ENCODE measurements at regions of chr2 and their contacts with region 1.

Region 1: GRCh38 chr2:230007931-230008707 is 60.6 kb downstream of the SLC16A14 start:
- DNase-seq: peak; percentile 46 to 81 (median 53)
- ATAC-seq: peak; percentile 53
- H3K4me3 ChIP-seq: no peak overlapping the region
- H3K27ac ChIP-seq: no peak overlapping the region
- H3K4me1 ChIP-seq: peaks cover 0 to 31% of the 10 kb centered on the region in 2 experiments; a peak in 3 of 5 replicates
- H3K27me3 ChIP-seq: no peaks in the 10 kb centered on the region
- CTCF ChIP-seq: peak; percentile 66 to 78 (median 69)
- EP300 ChIP-seq: no peak
- POLR2A ChIP-seq: no peak
- RAD21 ChIP-seq: peak; percentile 76 to 79

Region 2: DNA sequence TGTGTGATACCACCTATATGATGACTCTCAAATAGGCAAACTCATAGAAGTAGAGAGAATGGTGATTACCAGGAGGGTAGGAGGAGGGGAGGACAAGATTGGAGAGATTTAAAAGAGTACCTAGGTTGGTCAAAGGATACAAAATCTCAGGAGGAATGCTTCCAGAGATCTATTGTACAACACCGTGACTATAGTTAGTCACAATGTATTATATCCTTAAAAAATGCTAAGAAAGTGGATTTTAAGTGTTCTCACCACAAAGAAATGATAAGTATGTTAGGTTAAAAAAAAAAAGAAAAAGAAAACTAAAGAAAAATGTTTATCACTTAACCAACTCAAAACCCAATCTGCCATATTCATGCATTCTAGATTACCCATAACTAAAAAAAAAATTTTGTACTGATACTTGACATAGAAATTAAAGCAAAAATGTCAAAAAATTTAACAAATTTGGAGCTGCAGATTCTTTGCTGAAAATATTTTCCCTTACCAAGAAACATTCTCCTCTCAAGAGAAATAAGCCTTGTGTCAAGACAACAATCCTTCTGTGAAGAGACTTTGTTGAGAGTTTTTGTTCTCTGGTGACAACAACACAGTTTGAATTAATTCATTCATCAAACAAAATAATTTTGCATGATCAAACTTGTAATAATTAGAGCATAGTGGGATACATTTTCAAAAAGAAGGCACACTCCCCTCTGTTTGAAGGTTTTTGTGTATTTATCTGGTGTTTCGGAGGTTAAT is 506.9 kb before region 1 on chr2:
- CTCF ChIA-PET with region 1: no interaction called
- POLR2A ChIA-PET with region 1: no interaction called
- in situ Hi-C with region 1: no loop called
- intact Hi-C with region 1: no loop called
- DNase-seq: no peak
- ATAC-seq: no peak
- H3K4me3 ChIP-seq: no peak overlapping the region
- H3K27ac ChIP-seq: no peak overlapping the region
- H3K4me1 ChIP-seq: no peaks in the 10 kb centered on the region
- H3K27me3 ChIP-seq: no peaks in the 10 kb centered on the region
- CTCF ChIP-seq: no peak
- EP300 ChIP-seq: no peak
- POLR2A ChIP-seq: no peak
- RAD21 ChIP-seq: no peak

Region 3: DNA sequence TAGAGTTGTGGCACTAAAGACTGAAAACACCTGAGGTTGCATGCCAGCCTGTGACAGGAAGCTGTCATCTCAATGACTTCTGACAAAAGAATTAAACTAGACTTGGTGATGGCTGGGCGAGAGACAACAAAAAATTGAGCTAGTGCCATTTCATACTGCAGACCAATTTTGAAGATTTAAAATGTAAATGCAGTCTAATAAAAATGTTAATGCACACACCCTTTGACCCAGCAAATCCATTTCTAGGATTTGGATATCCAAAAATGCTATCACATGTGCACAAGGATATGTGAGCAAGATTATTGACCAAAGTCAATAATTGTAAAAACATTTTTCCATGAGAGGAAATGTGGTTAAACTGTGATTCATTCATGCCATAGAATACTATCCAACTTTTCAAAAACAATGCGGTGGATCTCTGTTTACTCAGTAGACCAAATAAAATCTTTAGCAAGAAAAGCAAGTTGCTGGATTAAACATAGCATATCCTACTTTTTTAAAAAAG is 80.2 kb before region 1 on chr2:
- CTCF ChIA-PET with region 1: no interaction called
- POLR2A ChIA-PET with region 1: no interaction called
- in situ Hi-C with region 1: no loop called
- intact Hi-C with region 1: no loop called
- DNase-seq: no peak
- ATAC-seq: no peak
- H3K4me3 ChIP-seq: no peak overlapping the region
- H3K27ac ChIP-seq: no peak overlapping the region
- H3K4me1 ChIP-seq: peaks cover 0 to 4% of the 10 kb centered on the region in 2 experiments; a peak in 2 of 5 replicates
- H3K27me3 ChIP-seq: no peaks in the 10 kb centered on the region
- CTCF ChIP-seq: no peak
- EP300 ChIP-seq: no peak
- POLR2A ChIP-seq: no peak
- RAD21 ChIP-seq: no peak

Region 4: DNA sequence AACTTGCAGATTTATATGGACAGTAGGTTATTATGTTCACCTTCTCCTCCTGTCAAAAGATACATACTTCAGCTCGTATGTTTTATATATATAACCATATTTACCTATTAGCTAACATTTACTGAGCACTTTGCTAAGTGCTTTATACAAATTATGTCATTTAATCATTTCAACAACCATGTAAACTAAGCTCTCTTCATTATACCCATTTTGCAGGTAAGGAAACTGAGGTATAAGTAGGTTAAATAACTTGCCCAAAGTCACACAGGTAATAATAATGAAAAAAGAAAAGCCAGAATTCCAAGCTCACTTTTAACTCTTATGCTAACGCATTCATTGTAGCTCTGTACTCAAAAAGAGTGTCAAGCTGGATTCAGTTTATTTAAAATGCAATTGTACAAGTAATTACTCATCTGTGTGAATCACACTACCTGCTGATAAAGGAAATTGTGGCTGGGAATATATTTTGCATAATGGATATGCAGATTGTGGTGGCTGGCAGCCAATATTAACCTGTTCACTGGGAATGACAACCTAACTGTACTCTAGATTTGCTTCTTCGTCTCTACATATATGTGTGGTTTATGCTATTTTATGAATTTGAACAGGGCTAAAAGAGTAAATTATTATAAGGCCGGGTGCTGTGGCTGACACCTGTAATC is 40.0 kb after region 1 on chr2:
- CTCF ChIA-PET with region 1: no interaction called
- POLR2A ChIA-PET with region 1: interaction called, 3 read pairs
- in situ Hi-C with region 1: loop called (anchors 5 kb)
- intact Hi-C with region 1: no loop called
- DNase-seq: no peak
- ATAC-seq: no peak
- H3K4me3 ChIP-seq: no peak overlapping the region
- H3K27ac ChIP-seq: no peak overlapping the region
- H3K4me1 ChIP-seq: peaks cover 0 to 3% of the 10 kb centered on the region in 2 experiments; a peak in 1 of 5 replicates
- H3K27me3 ChIP-seq: peaks cover 0 to 19% of the 10 kb centered on the region in 2 experiments; a peak in 3 of 5 replicates
- CTCF ChIP-seq: no peak
- EP300 ChIP-seq: no peak
- POLR2A ChIP-seq: no peak
- RAD21 ChIP-seq: no peak

Region 5: DNA sequence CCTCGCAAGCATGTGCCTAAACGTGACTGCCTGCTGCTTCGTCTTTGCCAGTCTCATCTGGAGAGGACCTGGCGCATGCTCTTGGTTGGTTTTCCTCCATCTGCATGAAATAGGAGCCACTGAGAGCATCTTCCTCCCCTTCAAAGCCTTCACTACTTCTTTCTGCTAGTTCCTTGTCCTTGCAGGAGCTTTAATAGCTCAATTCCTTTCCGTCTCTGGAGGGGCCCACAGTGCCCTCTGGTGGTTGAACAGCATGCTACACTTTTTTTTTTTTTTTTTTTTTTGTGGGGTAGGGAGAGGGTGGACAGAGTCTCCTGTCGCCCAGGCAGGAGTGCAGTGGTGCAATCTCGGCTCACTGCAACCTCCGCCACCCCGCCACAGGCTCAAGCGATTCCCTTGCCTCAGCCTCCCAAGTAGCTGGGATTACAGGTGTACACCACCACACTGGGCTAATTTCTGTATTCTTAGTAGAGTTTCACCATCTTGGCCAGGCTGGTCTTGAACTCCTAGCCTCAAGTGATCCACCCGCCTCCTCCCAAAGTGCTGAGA is 152.1 kb after region 1 on chr2:
- CTCF ChIA-PET with region 1: interaction called, 8 read pairs
- POLR2A ChIA-PET with region 1: no interaction called
- in situ Hi-C with region 1: loop called (anchors 5 kb)
- intact Hi-C with region 1: loop called (anchors 1 kb)
- DNase-seq: peak; percentile 37 to 53 (median 52)
- ATAC-seq: peak; percentile 75
- H3K4me3 ChIP-seq: no peak overlapping the region
- H3K27ac ChIP-seq: no peak overlapping the region
- H3K4me1 ChIP-seq: peaks cover 0 to 2% of the 10 kb centered on the region in 2 experiments; a peak in 2 of 5 replicates
- H3K27me3 ChIP-seq: no peaks in the 10 kb centered on the region
- CTCF ChIP-seq: peak; percentile 55 to 69 (median 62)
- EP300 ChIP-seq: no peak
- POLR2A ChIP-seq: no peak
- RAD21 ChIP-seq: peak; percentile 24 to 55; a peak in 2 of 4 replicates

Region 6: DNA sequence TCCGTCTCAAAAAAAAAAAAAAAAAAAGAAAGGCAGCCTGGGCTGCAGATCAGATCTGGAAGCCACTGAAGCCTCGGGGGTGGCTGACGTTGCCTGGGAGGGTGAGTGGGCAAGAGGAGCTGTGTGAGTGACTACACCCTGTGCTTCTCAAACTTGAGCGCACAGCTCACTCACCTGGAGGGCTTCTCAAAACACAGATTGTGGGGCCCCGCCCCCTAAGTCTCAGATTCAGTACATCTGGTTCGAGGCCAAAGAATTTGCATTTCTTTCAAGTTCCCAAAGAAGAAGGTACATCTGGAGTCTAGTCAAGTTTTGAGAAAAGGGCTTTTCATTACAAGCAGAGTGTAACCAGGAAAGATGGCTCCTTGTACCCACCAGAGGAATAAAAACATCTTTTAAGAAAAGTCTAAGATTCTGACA is 606.8 kb after region 1 on chr2:
- CTCF ChIA-PET with region 1: interaction called, 13 read pairs
- POLR2A ChIA-PET with region 1: no interaction called
- in situ Hi-C with region 1: loop called (anchors 5 kb)
- intact Hi-C with region 1: loop called (anchors 1 kb)
- DNase-seq: peak in 1 of 4 experiments; percentile 20
- ATAC-seq: peak; percentile 43
- H3K4me3 ChIP-seq: no peak overlapping the region
- H3K27ac ChIP-seq: no peak overlapping the region
- H3K4me1 ChIP-seq: no peaks in the 10 kb centered on the region; a peak in 1 of 5 replicates
- H3K27me3 ChIP-seq: no peaks in the 10 kb centered on the region
- CTCF ChIP-seq: no peak
- EP300 ChIP-seq: no peak
- POLR2A ChIP-seq: no peak
- RAD21 ChIP-seq: no peak

Measured in K562 (cell line).